ENCODE measurements at regions of chr2 and their contacts with region 1.

Region 1: DNA sequence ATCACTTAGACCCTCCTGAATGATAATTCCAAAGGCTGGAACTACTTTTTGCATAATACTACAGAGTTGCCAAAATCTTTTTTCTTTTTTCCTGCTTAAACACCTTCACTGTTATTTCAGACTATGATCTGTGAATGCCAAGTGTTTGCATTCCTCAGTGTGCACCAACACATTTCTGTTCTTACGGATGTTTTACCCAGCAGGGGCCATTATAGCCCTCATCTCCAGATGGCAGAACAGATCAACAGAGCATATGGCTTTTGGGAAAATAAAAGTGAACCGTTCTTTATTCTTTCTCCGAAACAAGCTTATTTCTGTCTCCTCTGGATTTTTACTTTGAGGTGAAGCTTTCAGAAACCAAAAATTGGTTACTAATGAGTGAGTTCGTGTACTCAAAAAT is 1226.6 kb upstream of the FAM98A start:
- DNase-seq: no peak
- H3K4me3 Mint-ChIP-seq: no peak overlapping the region
- H3K27ac Mint-ChIP-seq: no peak overlapping the region
- H3K4me1 Mint-ChIP-seq: no peaks in the 10 kb centered on the region
- H3K27me3 Mint-ChIP-seq: no peaks in the 10 kb centered on the region
- CTCF ChIP-seq: no peak

Region 2: GRCh38 chr2:34808426-34808825 is 17.3 kb before region 1 on chr2:
- CTCF ChIA-PET with region 1: no interaction called
- intact Hi-C with region 1: loop called (anchors 1 kb)
- DNase-seq: no peak
- H3K4me3 Mint-ChIP-seq: no peak overlapping the region
- H3K27ac Mint-ChIP-seq: no peak overlapping the region
- H3K4me1 Mint-ChIP-seq: no peaks in the 10 kb centered on the region
- H3K27me3 Mint-ChIP-seq: no peaks in the 10 kb centered on the region
- CTCF ChIP-seq: no peak

Measured in Calu3 (cell line).